ENCODE measurements at regions of chr11 and their contacts with region 1.

Region 1: DNA sequence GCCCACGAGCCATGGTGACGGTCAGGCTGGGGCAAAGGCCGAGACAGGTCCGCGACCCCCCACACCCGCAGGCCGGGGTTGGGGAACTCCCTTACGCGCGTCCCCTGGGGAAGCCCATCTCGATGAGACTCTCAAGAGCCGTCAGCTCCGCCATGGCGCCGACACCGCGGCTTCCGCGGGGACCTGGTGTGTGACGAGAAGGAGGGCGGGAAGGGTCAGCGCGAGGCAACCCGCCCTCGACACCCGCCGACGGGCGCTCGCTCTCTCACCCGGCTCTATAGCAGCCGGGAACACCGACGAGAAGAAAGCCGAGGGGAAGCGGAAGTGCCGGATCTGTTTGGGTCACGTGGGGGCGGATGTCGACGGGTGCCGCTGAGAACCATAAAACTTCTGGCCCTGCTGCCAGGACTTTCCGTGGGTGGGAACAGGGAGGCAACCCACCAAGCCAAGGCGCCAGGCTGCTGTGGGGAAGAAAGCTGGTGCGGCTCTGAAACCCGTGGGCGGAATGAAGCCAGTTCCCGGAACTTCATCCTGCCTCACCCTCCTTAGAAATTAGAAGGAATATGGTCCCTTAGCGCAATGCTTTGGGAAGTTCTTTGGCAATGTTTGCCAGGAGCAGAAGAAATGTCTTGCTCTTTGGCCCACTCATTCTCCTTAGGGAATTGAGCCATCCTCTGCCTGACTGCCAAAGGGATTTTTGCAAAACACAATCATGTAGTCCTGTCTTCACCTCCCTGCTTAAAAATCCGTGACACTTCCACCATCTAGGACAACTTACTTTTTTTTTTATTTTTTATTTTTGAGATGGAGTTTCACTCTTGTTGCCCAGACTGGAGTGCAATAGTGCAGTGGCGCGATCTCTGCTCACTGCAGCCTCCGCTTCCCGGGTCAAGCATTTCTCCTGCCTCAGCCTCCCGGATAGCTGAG is at the start of gene UBXN1:
- DNase-seq: peak; percentile 93 to 96 (median 94)
- ATAC-seq: peak; percentile 79 to 92 (median 90)
- H3K4me3 ChIP-seq: peak within 1 kb of the TSS; percentile 61 to 100 (median 94)
- H3K27ac ChIP-seq: peak within 1 kb of the TSS; percentile 76 to 96 (median 89)
- H3K4me1 ChIP-seq: peaks cover 6 to 45% (median 21%) of the 10 kb centered on the region in 12 donors
- H3K27me3 ChIP-seq: no peaks in the 10 kb centered on the region
- CTCF ChIP-seq: no peak
- POLR2A ChIP-seq: peak in 1 of 2 donors; percentile 73
- total RNA-seq, gene UBXN1: 69.2 to 116 (median 83.1) TPM

Region 2: GRCh38 chr11:62601394-62602140 is 77.5 kb before region 1 on chr11 and contains the start of gene MTA2:
- intact Hi-C with region 1: loop called in 1 of 10 experiments (anchors 5 kb)
- DNase-seq: peak; percentile 97 to 98 (median 98)
- ATAC-seq: peak; percentile 87 to 91 (median 90)
- H3K4me3 ChIP-seq: peak within 1 kb of the TSS; percentile 81 to 100 (median 90)
- H3K27ac ChIP-seq: peak within 1 kb of the TSS; percentile 91 to 100 (median 98)
- H3K4me1 ChIP-seq: peaks cover 4 to 41% (median 32%) of the 10 kb centered on the region in 12 donors
- H3K27me3 ChIP-seq: no peaks in the 10 kb centered on the region
- CTCF ChIP-seq: no peak
- POLR2A ChIP-seq: peak in 1 of 2 donors; percentile 60
- total RNA-seq, gene MTA2: 24.1 to 55.3 (median 33.7) TPM

Region 3: GRCh38 chr11:62632492-62632891 is 46.5 kb before region 1 on chr11:
- intact Hi-C with region 1: no loop called
- DNase-seq: peak in 1 of 5 donors; percentile 21
- ATAC-seq: peak in 1 of 4 donors; percentile 72
- H3K4me3 ChIP-seq: no peak overlapping the region
- H3K27ac ChIP-seq: no peak overlapping the region
- H3K4me1 ChIP-seq: peaks cover 0 to 5% (median 0%) of the 10 kb centered on the region in 12 donors
- H3K27me3 ChIP-seq: no peaks in the 10 kb centered on the region
- CTCF ChIP-seq: no peak
- POLR2A ChIP-seq: no peak

Region 4: DNA sequence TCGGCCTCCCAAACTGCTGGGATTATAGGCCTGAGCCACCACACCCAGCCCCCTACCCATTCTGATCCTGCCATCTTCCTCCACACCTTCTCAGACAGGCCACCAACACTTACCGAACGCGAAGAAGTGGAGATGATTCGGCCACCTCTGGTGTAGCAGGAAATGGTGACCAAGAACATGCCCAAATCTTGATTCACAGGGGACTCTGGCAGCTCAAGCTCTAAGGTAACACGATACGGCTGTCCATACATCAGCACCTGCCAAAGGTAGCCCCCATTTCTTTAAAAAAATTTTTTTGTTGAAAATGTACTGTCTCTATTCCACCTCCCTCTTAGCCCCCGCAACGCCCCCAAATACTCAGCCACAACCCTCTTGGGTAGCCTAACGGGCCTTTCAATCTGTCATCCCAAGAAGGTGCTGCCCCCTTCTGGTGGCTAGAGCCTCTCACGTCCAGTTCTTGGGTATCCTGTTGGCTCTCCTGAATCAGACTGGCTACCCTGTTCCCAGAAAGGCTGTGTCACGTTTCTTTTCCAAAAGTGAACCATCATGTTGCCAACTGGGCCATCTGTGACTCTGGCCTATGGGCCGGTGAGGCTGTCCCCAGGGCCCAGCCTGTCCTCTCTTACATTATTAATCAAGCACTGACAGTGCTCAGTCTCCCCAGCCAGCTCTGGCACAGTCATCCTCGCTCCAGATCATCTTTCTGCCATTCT is 15.6 kb after region 1 on chr11:
- intact Hi-C with region 1: loop called in 1 of 10 experiments (anchors 2 kb)
- DNase-seq: peak; percentile 80 to 90 (median 83)
- ATAC-seq: peak; percentile 57 to 85 (median 78)
- H3K4me3 ChIP-seq: no peak overlapping the region
- H3K27ac ChIP-seq: peak overlapping the region in 5 of 12 donors; percentile 13 to 42 (median 34)
- H3K4me1 ChIP-seq: peaks cover 0 to 21% (median 14%) of the 10 kb centered on the region in 12 donors
- H3K27me3 ChIP-seq: no peaks in the 10 kb centered on the region
- CTCF ChIP-seq: peak; percentile 69 to 90 (median 81)
- POLR2A ChIP-seq: no peak

Region 5: GRCh38 chr11:62705880-62706849 is 27.1 kb after region 1 on chr11:
- intact Hi-C with region 1: loop called in 1 of 10 experiments (anchors 2 kb)
- DNase-seq: peak; percentile 94 to 98 (median 96)
- ATAC-seq: peak; percentile 65 to 90 (median 86)
- H3K4me3 ChIP-seq: peak overlapping the region; percentile 63 to 89 (median 78)
- H3K27ac ChIP-seq: peak overlapping the region; percentile 71 to 95 (median 88)
- H3K4me1 ChIP-seq: peaks cover 0 to 61% (median 34%) of the 10 kb centered on the region in 12 donors
- H3K27me3 ChIP-seq: no peaks in the 10 kb centered on the region
- CTCF ChIP-seq: no peak
- POLR2A ChIP-seq: peak in 1 of 2 donors; percentile 60

Measured in heart left ventricle (tissue), 16 donors.